ENCODE measurements at regions of chr3 and their contacts with region 1.

Region 1: DNA sequence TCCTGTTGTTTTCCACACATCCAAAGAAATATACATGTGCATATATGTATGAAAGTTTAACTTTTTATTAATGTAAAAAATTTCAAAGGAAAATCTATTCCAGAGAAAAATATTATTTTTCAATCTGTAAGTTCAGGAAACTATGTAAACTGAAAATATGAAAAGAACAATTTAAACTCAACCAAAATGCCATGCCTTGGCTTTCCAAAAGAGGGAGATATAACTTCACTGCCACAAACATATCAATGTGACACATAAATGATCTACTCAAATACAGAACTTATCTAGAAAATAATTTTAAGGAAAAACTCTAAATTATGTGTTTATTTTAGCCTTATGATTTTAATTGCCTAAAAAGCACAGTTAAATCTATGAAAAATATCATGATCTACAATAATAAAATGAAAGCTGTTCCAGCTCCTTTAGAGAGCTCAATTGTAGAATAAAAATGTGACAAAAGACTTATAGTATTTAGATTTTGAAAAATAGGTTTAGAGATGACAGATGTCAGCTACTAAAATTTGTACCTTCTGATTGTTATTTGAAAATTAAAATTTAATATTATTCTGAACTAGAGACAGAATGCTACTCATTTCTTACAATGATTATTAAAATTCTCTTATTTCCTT is 94.8 kb downstream of the GBE1 start:
- DNase-seq: no peak
- H3K4me3 ChIP-seq: no peak overlapping the region
- H3K27ac ChIP-seq: no peak overlapping the region
- H3K4me1 ChIP-seq: no peaks in the 10 kb centered on the region
- H3K27me3 ChIP-seq: no peaks in the 10 kb centered on the region
- CTCF ChIP-seq: peak; percentile 39 to 88 (median 59)
- POLR2A ChIP-seq: no peak

Region 2: DNA sequence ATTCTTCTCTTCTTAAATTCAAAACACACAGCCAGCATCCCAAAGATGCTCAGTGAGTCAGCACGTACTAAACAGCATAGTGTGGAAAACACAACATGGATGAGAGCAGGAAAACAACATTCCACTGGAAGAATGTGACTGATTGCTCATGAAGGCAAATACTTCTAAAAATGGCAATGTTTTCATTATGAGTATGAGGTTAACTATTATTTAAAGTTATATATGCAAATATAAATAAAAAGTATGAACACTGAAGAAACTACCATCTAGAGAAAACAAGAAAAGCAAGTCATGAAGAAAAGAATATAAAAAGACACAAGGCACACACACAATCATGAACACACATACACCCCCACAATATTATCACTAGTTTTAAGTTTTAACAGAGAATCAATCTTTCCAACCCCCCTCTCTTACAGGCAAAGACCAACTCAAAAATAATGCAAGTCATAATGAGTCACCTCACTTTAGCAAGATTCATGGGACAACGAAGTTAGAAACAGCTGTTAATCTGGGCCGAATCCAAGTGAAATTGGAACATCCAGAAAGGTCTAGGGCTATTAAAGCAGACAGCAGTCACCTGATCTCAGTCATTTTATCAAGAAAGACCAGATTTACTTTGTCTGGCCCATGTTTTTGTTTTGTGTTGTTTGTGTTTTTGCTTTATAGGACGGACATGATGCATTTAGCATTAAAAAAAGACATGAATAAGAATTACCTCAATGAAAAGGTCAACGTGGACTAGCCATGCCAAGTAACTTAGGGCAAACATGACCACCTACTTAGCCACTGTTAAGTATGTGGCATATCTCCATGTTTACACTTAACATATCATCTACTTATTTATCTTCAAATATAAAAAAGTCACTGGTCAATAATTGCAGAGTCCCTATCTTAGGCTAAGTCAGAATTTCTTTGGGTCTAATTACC is 76.8 kb after region 1 on chr3:
- intact Hi-C with region 1: no loop called
- DNase-seq: peak; percentile 18 to 24
- H3K4me3 ChIP-seq: no peak overlapping the region
- H3K27ac ChIP-seq: peak overlapping the region; percentile 56 to 82 (median 82)
- H3K4me1 ChIP-seq: peaks cover 19 to 37% of the 10 kb centered on the region in 2 donors
- H3K27me3 ChIP-seq: no peaks in the 10 kb centered on the region
- CTCF ChIP-seq: no peak
- POLR2A ChIP-seq: no peak

Region 3: DNA sequence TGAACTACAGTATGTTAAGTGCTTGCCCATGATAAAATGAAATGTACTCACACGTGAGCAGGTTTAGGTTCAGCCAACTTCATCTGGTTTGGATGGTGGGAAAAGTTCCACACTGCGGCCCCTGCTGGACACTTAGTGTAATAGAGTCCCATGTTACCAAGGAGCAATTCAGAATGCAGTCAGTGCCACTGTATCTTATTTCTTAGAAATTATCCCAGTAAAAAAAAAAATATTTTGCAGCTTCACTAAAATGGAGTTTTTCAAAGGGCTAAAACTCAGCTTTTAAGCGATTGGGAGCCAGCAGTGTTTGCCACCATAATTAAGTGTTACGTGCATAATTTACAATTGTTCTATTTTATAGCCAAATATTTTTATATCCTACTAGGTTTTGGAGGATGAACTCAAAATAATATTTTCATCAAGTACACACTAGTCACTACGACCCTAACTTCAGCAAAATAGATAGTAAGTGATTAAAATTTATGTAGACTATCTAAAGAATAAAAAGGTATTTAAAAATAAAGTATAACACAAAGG is 466.5 kb after region 1 on chr3:
- intact Hi-C with region 1: loop called (anchors 10 kb)
- DNase-seq: peak; percentile 57 to 64
- H3K4me3 ChIP-seq: no peak overlapping the region
- H3K27ac ChIP-seq: no peak overlapping the region
- H3K4me1 ChIP-seq: no peaks in the 10 kb centered on the region
- H3K27me3 ChIP-seq: no peaks in the 10 kb centered on the region
- CTCF ChIP-seq: peak; percentile 55 to 86 (median 64)
- POLR2A ChIP-seq: no peak

Measured in thyroid gland (tissue), 4 donors.